CD8-positive, alpha-beta T cell (primary cell): ENCODE measurements at regions of chr1 and their contacts with region 1.

Region 1: GRCh38 chr1:94463765-94464330 is 45.7 kb downstream of the ABCD3 start:
- DNase-seq: peak in 2 of 9 experiments; percentile 42 to 57
- ATAC-seq: peak; percentile 46
- H3K4me3 ChIP-seq: no peak overlapping the region
- H3K4me3 Mint-ChIP-seq: no peak overlapping the region
- H3K27ac ChIP-seq: no peak overlapping the region
- H3K27ac Mint-ChIP-seq: no peak overlapping the region
- H3K4me1 ChIP-seq: no peaks in the 10 kb centered on the region
- H3K4me1 Mint-ChIP-seq: peaks cover 7% of the 10 kb centered on the region
- H3K27me3 ChIP-seq: no peaks in the 10 kb centered on the region
- H3K27me3 Mint-ChIP-seq: no peaks in the 10 kb centered on the region
- CTCF ChIP-seq: peak; percentile 36

Region 2: GRCh38 chr1:94039514-94039870 is 424.4 kb before region 1 on chr1:
- CTCF ChIA-PET with region 1: interaction called, 24 read pairs
- POLR2A ChIA-PET with region 1: no interaction called
- intact Hi-C with region 1: loop called (anchors 1 to 2 kb)
- DNase-seq: peak; percentile 4 to 67 (median 49)
- ATAC-seq: no peak
- H3K4me3 ChIP-seq: no peak overlapping the region
- H3K4me3 Mint-ChIP-seq: no peak overlapping the region
- H3K27ac ChIP-seq: no peak overlapping the region
- H3K27ac Mint-ChIP-seq: no peak overlapping the region
- H3K4me1 ChIP-seq: no peaks in the 10 kb centered on the region
- H3K4me1 Mint-ChIP-seq: no peaks in the 10 kb centered on the region
- H3K27me3 ChIP-seq: peaks cover 3 to 4% of the 10 kb centered on the region in 2 experiments
- H3K27me3 Mint-ChIP-seq: peaks cover 34% of the 10 kb centered on the region
- CTCF ChIP-seq: peak; percentile 68

Region 3: DNA sequence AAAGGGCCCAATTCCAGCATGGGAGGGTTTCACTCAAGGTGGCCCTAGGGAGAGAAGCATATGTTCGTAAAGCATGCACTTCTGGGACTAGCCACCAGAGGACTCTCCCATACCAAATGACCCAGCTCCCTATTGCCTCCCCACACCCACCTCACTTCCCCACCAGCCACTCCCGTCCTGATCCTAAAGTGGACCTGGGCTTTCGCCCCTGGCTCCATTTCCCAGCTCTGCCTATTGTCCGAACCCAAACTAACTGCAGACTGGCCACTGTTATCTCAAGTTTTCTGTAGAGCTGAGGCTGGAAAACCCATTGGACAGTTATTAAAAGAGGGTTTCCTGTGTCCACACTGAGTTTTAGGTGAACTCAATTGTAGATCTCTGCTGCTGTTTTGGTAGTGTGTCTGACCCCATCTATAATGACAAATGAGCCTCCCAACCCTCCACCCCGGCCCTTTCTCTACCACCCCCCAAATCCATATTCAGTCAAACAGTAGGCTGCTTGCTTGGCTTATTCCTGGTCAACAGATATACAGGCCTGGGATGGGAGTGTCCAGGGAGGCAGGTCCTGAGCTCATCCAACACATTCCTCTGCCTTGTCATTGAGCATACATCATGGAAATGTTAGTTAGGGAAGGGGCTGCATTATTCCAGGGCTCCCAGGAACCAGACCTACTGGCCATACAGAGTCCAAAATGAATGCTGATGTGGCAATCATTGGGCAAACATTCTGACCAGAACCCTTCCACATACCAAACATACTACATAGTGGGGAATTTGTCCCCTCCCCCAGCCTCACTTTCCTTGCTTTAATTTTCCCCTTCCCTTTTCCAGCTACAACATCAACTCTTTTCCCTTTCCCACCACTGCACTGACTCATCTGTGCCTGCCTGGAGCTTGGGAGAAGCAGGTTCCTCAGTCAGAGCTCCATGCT is 402.1 kb before region 1 on chr1:
- CTCF ChIA-PET with region 1: interaction called, 7 read pairs
- POLR2A ChIA-PET with region 1: no interaction called
- intact Hi-C with region 1: loop called in 1 of 2 experiments (anchors 1 kb)
- DNase-seq: peak in 4 of 9 experiments; percentile 21 to 55 (median 29)
- ATAC-seq: no peak
- H3K4me3 ChIP-seq: no peak overlapping the region
- H3K4me3 Mint-ChIP-seq: no peak overlapping the region
- H3K27ac ChIP-seq: no peak overlapping the region
- H3K27ac Mint-ChIP-seq: no peak overlapping the region
- H3K4me1 ChIP-seq: no peaks in the 10 kb centered on the region
- H3K4me1 Mint-ChIP-seq: no peaks in the 10 kb centered on the region
- H3K27me3 ChIP-seq: peaks cover 0 to 2% of the 10 kb centered on the region in 2 experiments
- H3K27me3 Mint-ChIP-seq: peaks cover 12% of the 10 kb centered on the region
- CTCF ChIP-seq: peak; percentile 50

Region 4: DNA sequence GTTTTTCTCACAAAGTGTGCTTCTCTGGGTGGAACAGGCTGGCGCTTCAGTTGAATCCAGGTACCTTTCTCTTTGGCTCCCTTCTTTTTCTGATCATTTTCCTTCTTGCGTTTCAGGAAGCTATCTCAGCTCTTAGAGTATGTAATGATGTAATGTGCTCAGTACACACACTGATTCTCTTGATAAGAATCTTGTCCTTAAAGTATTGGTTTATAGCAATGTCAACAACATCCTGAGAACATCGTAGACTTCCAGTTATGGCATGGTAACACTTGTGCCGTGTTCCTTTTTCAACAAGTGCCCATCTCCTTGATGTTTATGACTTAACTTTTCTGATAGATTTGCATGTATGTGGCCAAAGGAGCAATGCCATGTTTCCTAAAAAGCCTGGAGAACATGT is 57.4 kb before region 1 on chr1:
- CTCF ChIA-PET with region 1: no interaction called
- POLR2A ChIA-PET with region 1: no interaction called
- intact Hi-C with region 1: no loop called
- DNase-seq: no peak
- ATAC-seq: no peak
- H3K4me3 ChIP-seq: no peak overlapping the region
- H3K4me3 Mint-ChIP-seq: no peak overlapping the region
- H3K27ac ChIP-seq: no peak overlapping the region
- H3K27ac Mint-ChIP-seq: no peak overlapping the region
- H3K4me1 ChIP-seq: no peaks in the 10 kb centered on the region
- H3K4me1 Mint-ChIP-seq: no peaks in the 10 kb centered on the region
- H3K27me3 ChIP-seq: peaks cover 0 to 7% of the 10 kb centered on the region in 2 experiments
- H3K27me3 Mint-ChIP-seq: peaks cover 7% of the 10 kb centered on the region
- CTCF ChIP-seq: no peak

Region 5: GRCh38 chr1:94417978-94418663 is 45.7 kb before region 1 on chr1 and contains the start of gene ABCD3:
- CTCF ChIA-PET with region 1: no interaction called
- POLR2A ChIA-PET with region 1: no interaction called
- intact Hi-C with region 1: loop called in 1 of 2 experiments (anchors 5 kb)
- DNase-seq: peak; percentile 93 to 99 (median 97)
- ATAC-seq: peak; percentile 91
- H3K4me3 ChIP-seq: peak within 1 kb of the TSS; percentile 63 to 81
- H3K4me3 Mint-ChIP-seq: no peak within 1 kb of the TSS
- H3K27ac ChIP-seq: peak within 1 kb of the TSS; percentile 67 to 85
- H3K27ac Mint-ChIP-seq: peak within 1 kb of the TSS; percentile 85
- H3K4me1 ChIP-seq: peaks cover 27% of the 10 kb centered on the region
- H3K4me1 Mint-ChIP-seq: peaks cover 42% of the 10 kb centered on the region
- H3K27me3 ChIP-seq: no peaks in the 10 kb centered on the region
- H3K27me3 Mint-ChIP-seq: peaks cover 2% of the 10 kb centered on the region
- CTCF ChIP-seq: no peak
- total RNA-seq, gene ABCD3: 17.9 to 18.1 TPM

Region 6: DNA sequence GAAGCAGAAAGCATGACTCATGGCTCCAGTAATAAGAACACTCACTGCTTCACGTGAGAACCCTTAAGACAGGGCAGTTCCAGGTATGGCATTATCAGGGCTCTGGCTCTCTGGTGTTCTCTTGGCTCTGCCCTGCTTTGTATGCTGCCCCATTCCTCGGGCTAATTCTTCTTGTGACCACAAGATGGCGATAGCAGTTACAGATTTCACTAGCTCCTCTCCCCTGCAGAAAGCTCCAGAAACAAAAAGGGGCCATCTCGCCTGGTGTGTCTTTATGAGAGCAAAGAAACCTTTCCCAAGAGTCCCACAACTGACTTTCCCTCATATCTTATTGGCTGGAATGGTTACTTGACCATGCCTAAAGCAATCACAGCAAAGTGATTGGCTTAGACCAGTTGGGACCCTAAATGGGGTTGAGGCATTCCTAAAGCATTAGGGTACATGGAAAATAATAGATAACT is 17.7 kb after region 1 on chr1:
- CTCF ChIA-PET with region 1: interaction called, 23 read pairs
- POLR2A ChIA-PET with region 1: no interaction called
- intact Hi-C with region 1: no loop called
- DNase-seq: peak in 7 of 9 experiments; percentile 11 to 68 (median 32)
- ATAC-seq: peak; percentile 65
- H3K4me3 ChIP-seq: no peak overlapping the region
- H3K4me3 Mint-ChIP-seq: no peak overlapping the region
- H3K27ac ChIP-seq: no peak overlapping the region
- H3K27ac Mint-ChIP-seq: no peak overlapping the region
- H3K4me1 ChIP-seq: no peaks in the 10 kb centered on the region
- H3K4me1 Mint-ChIP-seq: no peaks in the 10 kb centered on the region
- H3K27me3 ChIP-seq: no peaks in the 10 kb centered on the region
- H3K27me3 Mint-ChIP-seq: no peaks in the 10 kb centered on the region
- CTCF ChIP-seq: peak; percentile 76